Cardiac septum (tissue), 1 donor: ENCODE measurements at regions of chr9 and their contacts with region 1.

Region 1: GRCh38 chr9:94783102-94783664 is 56.7 kb downstream of the AOPEP start:
- DNase-seq: peak; percentile 84

Region 2: GRCh38 chr9:94681508-94681907 is 101.7 kb before region 1 on chr9:
- intact Hi-C with region 1: loop called (anchors 5 kb)
- DNase-seq: peak; percentile 87

Region 3: DNA sequence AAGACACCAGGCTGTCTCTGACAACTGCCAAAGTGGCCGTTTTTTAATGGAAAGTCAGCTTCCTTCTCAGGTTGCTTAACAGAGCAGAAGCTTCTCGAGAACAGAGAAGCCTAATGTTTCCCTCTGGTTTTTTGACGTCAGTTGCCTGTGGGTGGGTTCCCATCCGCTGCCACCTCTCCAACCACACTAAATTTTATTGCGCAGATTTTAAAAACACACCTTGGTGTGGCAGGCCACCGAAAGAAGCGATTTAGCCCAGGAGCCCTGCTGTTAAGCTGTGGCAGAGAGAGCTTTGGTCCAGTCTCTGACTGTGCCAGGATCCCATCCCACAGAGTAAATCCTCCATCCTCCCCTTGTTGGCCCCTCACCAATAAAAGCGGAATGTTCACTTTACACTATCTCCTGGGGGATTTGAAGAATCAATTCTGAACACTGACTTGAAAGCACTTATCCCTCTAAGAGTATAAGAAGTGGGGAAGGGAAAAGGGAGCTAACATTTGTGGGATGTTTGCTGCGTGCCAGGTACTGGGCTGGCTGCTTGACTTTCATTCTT is 124.9 kb after region 1 on chr9:
- intact Hi-C with region 1: loop called (anchors 5 kb)
- DNase-seq: no peak

Region 4: GRCh38 chr9:95004411-95005277 is 221.5 kb after region 1 on chr9:
- intact Hi-C with region 1: loop called (anchors 2 kb)
- DNase-seq: peak; percentile 83

Region 5: DNA sequence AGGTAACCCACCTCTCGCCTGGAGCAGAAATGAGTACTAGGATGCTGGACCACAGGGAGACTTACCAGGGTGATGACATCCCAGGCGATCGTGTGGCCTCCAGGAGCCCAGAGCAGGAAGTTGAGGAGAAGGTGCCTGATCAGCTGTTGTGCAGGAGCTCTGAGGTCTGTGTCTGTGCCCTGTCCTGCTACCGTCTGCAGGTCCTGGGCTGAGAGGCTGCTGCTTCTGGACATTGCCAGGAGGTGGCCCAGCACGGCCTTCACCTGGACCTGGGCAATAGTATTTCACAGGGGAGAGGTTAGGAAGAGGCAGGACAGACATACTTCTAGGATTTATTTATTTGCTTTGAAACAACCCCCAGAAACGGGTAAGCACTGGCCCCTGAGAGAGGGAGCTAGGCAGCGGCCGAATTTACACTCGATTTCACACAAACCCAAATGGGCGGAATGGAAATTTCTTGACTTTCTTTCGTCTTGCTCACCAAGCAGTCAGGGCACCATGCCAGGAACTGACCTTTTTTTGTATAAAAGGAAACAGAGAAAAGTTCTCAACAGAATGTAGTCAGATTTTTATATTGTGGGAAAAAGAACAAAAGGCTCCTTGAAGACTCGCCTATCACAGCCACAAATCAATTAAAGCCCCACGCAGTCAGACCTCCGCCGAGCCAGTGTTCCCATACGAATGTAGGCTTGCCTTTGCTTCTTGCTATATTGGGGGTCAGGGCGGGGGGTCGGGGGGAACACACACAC is 324.0 kb after region 1 on chr9:
- intact Hi-C with region 1: loop called (anchors 5 kb)
- DNase-seq: peak; percentile 65

Region 6: DNA sequence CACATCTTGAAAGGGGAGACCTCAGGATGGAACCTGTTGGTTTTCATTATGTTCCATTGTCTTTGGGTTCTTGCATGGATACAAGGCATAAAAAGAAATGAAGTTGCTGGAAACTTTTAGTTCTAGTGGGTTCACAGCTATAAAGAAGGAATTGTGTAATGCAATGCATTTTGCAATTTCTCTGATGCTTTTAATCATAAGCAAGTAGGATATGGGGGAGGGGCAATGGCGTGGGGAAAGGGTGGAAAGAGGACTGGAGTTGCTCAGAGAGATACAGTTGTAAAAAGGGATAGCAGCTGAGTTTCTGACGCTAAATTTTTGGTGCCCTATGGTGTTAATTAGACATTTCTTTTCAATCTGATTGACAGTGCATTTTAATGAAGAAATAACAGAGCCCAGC is 622.9 kb after region 1 on chr9:
- intact Hi-C with region 1: no loop called
- DNase-seq: no peak